Activated T-helper 2 cell treated with anti-CD3 and anti-CD28 coated beads, Interferon-gamma antibody, Interleukin-2, Interleukin-4, amounts not matched to agents 10 μg/mL and 5 μg/mL and 100 μg/mL, durations not matched to agents 14 hours and 24 hours and 36 hours (primary cell): ENCODE measurements at regions of chr9 and their contacts with region 1.

Region 1: DNA sequence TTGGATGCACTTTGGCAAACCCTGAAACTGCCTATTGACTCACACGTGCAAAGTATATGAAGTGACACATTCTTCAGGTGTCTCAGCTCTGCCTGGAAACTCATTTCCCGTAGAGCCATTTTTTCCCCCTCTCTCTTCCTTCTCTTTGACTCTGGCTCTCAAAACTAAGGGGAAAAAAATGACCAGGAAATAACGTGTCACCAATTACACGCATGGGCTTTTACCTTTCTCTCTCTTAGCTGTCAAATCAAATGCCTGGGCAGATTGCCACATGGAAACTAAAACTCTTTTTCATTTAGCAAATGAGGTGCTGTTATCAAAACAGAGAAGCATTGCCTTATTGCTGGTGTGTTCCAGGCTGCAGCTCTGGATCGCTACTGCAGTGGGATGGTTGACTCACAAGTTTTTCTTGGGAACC is 18.3 kb upstream of the IFNK start:
- DNase-seq: no peak
- H3K4me3 Mint-ChIP-seq: no peak overlapping the region
- H3K27ac Mint-ChIP-seq: no peak overlapping the region
- H3K4me1 Mint-ChIP-seq: peaks cover 9% of the 10 kb centered on the region
- H3K27me3 Mint-ChIP-seq: peaks cover 1% of the 10 kb centered on the region

Region 2: GRCh38 chr9:27524236-27524635 is 18.5 kb after region 1 on chr9 and contains the start of gene IFNK:
- intact Hi-C with region 1: loop called (anchors 2 kb)
- DNase-seq: no peak
- H3K4me3 Mint-ChIP-seq: no peak within 1 kb of the TSS
- H3K27ac Mint-ChIP-seq: no peak within 1 kb of the TSS
- H3K4me1 Mint-ChIP-seq: peaks cover 5% of the 10 kb centered on the region
- H3K27me3 Mint-ChIP-seq: peaks cover 27% of the 10 kb centered on the region
- total RNA-seq, gene IFNK: not detected in 2 replicates

Region 3: DNA sequence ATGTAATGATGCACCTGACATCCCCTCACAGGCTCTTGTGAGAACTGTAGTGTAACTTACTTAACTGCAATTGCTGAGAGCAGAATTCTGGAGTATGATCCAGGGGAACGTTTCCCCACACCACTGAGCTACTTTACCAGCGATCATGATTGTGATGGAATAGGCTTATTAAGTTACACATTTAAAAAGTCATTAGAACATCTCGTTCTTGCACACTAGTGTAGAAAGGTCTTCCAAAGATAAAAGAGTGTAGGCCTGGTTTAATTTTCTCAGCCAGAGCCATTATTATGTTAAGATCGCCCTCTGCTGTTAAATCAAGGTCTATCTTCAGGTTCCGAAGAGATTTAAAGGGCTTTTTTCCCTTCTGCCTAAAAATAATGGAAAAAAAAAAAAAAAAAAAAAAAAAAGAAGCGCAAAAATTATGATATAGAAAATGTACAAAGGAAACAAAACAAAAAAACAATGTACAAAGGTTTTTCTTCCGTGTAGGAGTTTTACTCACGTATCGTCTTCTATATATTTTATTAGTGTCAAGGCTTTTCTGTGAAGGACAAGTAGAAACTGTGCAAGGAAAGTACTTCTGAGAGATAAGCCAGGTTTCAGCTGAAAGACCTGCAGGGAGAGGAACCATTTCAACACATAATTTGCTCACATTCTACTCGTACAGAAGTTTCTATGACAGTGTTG is 42.4 kb after region 1 on chr9:
- intact Hi-C with region 1: no loop called
- DNase-seq: no peak
- H3K4me3 Mint-ChIP-seq: no peak overlapping the region
- H3K27ac Mint-ChIP-seq: no peak overlapping the region
- H3K4me1 Mint-ChIP-seq: no peaks in the 10 kb centered on the region
- H3K27me3 Mint-ChIP-seq: no peaks in the 10 kb centered on the region